B cell (primary cell): ENCODE measurements at regions of chr11 and their contacts with region 1.

Region 1: DNA sequence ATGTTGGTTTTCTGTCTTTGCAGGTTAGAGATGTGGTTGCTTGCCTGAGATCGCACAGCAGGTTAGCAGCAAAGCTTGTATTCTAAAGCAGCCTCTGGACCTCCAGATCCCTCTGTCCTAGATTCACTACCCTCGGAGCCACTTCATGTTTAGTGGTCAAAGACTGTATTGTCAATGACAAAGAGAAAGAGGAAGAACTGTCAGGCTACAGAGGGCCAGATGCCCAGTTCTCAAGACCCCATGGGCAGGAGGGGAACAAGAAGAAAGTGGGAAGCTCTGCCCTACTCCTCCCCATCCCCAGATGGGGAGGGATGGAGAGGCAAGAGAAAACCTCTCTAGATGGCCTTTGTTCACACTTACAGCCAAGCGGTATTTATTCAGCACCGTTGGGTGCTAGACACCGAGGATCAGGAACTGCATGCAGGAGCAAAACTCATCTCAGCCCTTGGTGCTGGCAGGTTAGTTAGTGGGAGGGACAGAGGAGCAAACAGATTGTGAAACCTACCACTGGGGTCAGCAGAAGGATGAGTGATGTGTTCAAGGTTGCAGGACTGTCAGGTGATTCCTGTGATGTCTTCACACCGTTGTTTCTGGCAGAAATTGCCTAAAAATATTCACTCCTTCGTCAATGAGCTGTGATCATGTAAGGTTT is 38.3 kb upstream of the PTPRJ start:
- DNase-seq: no peak
- ATAC-seq: no peak
- H3K4me3 ChIP-seq: no peak overlapping the region
- H3K4me3 Mint-ChIP-seq: no peak overlapping the region
- H3K27ac ChIP-seq: no peak overlapping the region
- H3K27ac Mint-ChIP-seq: peak overlapping the region; percentile 21
- H3K4me1 ChIP-seq: peaks cover 7% of the 10 kb centered on the region in 2 donors
- H3K4me1 Mint-ChIP-seq: peaks cover 21% of the 10 kb centered on the region
- H3K27me3 ChIP-seq: no peaks in the 10 kb centered on the region
- H3K27me3 Mint-ChIP-seq: no peaks in the 10 kb centered on the region
- CTCF ChIP-seq: no peak

Region 2: GRCh38 chr11:47642099-47642855 is 299.8 kb before region 1 on chr11 and contains the start of gene MTCH2:
- CTCF ChIA-PET with region 1: no interaction called
- POLR2A ChIA-PET with region 1: no interaction called
- intact Hi-C with region 1: no loop called
- DNase-seq: peak; percentile 99
- ATAC-seq: peak; percentile 94
- H3K4me3 ChIP-seq: peak within 1 kb of the TSS; percentile 79 to 86 (median 79)
- H3K4me3 Mint-ChIP-seq: peak within 1 kb of the TSS; percentile 93
- H3K27ac ChIP-seq: peak within 1 kb of the TSS; percentile 92
- H3K27ac Mint-ChIP-seq: peak within 1 kb of the TSS; percentile 96
- H3K4me1 ChIP-seq: peaks cover 13 to 21% of the 10 kb centered on the region in 2 donors
- H3K4me1 Mint-ChIP-seq: peaks cover 23% of the 10 kb centered on the region
- H3K27me3 ChIP-seq: no peaks in the 10 kb centered on the region
- H3K27me3 Mint-ChIP-seq: no peaks in the 10 kb centered on the region
- CTCF ChIP-seq: peak; percentile 29
- total RNA-seq, gene MTCH2: 26.9 and 30.9 TPM in 2 replicates

Region 3: GRCh38 chr11:47869546-47870393 is 72.3 kb before region 1 on chr11:
- CTCF ChIA-PET with region 1: no interaction called
- POLR2A ChIA-PET with region 1: interaction called, 15 read pairs
- intact Hi-C with region 1: no loop called
- DNase-seq: no peak
- ATAC-seq: no peak
- H3K4me3 ChIP-seq: no peak overlapping the region
- H3K4me3 Mint-ChIP-seq: no peak overlapping the region
- H3K27ac ChIP-seq: no peak overlapping the region
- H3K27ac Mint-ChIP-seq: peak overlapping the region; percentile 17
- H3K4me1 ChIP-seq: peaks cover 10 to 27% of the 10 kb centered on the region in 2 donors
- H3K4me1 Mint-ChIP-seq: peaks cover 40% of the 10 kb centered on the region
- H3K27me3 ChIP-seq: no peaks in the 10 kb centered on the region
- H3K27me3 Mint-ChIP-seq: no peaks in the 10 kb centered on the region
- CTCF ChIP-seq: no peak